HEK293T (cell line): ENCODE measurements at regions of chr18 and their contacts with region 1.

Region 1: GRCh38 chr18:35290073-35290735 is at the start of gene ZSCAN30:
- DNase-seq: peak; percentile 100

Region 2: GRCh38 chr18:35231052-35231451 is 59.2 kb before region 1 on chr18:
- CTCF ChIA-PET with region 1: no interaction called
- POLR2A ChIA-PET with region 1: interaction called, 12 read pairs
- DNase-seq: peak; percentile 91

Region 3: DNA sequence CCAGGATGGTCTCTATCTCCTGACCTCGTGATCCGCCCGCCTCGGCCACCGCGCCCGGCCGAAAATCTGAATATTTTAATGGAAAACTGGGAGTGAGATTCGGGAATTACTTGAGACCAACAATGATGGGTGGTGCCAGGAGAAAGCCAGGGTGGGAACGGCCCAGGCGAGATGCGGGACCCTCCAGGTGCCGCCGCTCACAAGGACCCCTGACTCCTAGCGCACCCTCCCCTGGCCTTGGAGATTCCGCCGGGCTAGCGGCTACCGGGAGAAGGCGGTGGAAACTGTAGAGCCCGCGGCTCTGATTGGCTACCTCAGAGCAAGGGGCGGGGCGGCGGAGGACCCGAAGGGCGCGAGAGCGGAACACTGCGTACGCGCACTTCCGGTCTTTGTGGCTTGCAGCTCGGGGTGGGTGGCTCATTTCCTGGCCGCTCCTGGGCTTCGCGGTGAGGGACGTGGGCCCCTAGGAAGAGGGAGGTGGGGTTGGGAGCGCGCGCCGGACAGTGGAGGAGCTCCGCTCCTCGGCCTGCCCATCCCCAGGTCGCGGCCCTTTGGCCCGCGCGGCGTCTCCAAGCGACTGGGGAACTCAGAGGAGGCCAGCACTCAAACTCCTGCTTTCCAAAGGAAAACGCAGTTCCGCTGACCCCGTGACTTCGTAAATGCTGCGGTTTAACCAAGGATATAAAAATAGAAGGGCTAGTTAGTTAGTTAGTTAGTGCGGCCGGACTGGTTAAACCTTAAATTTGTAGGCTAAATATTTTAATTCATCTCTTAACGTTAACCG is 49.3 kb before region 1 on chr18 and contains the start of gene ZNF397:
- CTCF ChIA-PET with region 1: no interaction called
- POLR2A ChIA-PET with region 1: interaction called, 26 read pairs
- DNase-seq: peak; percentile 100

Region 4: DNA sequence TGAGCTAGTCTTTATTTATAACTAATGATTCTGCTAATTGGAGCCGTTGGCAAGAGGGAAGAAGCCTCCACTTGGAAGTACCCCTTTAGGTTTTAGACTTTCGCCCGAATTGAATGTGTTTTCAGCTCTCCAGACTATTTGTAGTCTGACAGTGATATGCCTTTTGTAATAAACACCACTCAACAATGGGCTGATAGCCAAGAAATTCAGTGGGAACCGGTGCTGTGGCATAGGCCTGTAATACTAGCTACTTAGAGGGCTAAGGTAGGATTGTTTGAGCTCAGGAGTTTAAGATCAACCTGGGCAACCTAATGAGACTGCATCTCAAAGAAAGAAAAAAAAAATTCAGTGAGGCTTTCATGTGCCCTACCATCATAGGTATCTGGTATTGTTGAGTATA is 13.4 kb after region 1 on chr18:
- CTCF ChIA-PET with region 1: no interaction called
- POLR2A ChIA-PET with region 1: interaction called, 11 read pairs
- DNase-seq: no peak

Region 5: DNA sequence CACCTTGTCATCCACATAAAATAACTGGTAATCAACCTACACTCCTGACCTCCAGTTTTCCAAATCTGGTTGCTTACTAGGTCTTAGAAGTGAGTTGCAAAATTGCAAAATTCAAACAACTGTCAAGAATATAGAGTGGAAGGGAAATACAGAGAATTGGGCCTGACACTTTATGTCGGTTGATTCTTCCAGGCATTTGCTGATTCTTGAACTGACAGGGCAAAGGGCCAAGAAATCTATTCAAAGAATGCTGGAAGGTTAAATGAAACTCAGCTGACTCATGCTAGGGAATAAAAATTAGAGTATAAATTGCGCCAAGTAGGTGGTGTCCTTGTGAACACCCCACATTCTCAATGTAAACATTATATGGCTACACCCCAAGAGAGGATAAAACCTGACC is 21.3 kb after region 1 on chr18:
- CTCF ChIA-PET with region 1: no interaction called
- POLR2A ChIA-PET with region 1: interaction called, 10 read pairs
- DNase-seq: no peak

Region 6: GRCh38 chr18:35343936-35344735 is 53.9 kb after region 1 on chr18 and contains the start of gene ZNF24:
- CTCF ChIA-PET with region 1: no interaction called
- POLR2A ChIA-PET with region 1: interaction called, 23 read pairs
- DNase-seq: peak; percentile 100